MCF 10A (cell line): ENCODE measurements at regions of chr6 and their contacts with region 1.

Region 1: DNA sequence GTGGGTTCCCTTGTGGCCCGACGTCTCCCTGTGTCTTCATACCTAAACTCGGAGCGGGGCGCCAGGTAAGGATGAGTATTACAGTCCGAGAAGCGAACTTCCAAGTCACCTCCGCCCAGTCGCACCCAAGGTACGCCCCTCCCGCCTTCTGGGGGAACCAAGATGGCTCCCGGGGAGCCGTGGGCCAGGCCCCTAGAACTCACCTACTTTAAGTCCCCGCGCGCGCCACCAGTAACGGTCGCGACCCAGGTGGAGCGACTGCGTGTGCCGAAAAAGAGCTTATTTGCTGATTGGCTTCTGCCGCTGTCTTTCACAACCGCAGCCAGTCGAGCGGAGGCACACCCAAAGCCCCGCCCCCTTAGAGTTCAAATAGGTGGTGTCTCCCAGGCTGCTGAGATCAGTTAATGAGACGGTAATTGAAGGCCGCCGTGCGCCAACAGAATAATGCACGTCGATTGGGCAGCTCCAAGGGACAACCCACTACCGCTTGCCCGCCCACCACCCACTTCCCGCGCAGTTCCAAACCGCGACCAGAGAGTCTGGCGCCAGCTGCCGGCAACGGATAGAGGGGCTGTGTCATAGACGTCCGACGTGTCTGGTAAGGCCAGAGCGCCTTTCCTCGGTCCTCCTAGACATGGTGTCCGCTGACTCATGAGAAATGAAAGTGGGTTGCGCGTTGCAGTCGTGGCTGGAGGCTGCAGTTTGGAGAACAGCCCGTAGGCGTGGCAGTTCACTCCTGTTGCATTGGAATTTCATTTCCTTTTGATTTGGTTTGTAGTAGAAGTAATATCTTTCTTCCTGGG is at the start of gene MDC1:
- DNase-seq: peak; percentile 100
- H3K4me3 Mint-ChIP-seq: peak within 1 kb of the TSS; percentile 88
- H3K27ac Mint-ChIP-seq: peak within 1 kb of the TSS; percentile 94
- H3K4me1 Mint-ChIP-seq: peaks cover 38% of the 10 kb centered on the region
- H3K27me3 Mint-ChIP-seq: no peaks in the 10 kb centered on the region
- CTCF ChIP-seq: no peak
- total RNA-seq, gene MDC1: 50.6 and 54.5 TPM in 2 replicates

Region 2: GRCh38 chr6:30541515-30542403 is 175.5 kb before region 1 on chr6:
- CTCF ChIA-PET with region 1: no interaction called
- POLR2A ChIA-PET with region 1: no interaction called
- intact Hi-C with region 1: loop called (anchors 5 kb)
- DNase-seq: peak; percentile 74
- H3K4me3 Mint-ChIP-seq: peak overlapping the region; percentile 15
- H3K27ac Mint-ChIP-seq: no peak overlapping the region
- H3K4me1 Mint-ChIP-seq: peaks cover 12% of the 10 kb centered on the region
- H3K27me3 Mint-ChIP-seq: no peaks in the 10 kb centered on the region
- CTCF ChIP-seq: peak; percentile 92

Region 3: GRCh38 chr6:30672445-30673253 is 44.6 kb before region 1 on chr6 and contains the start of gene DHX16:
- CTCF ChIA-PET with region 1: interaction called, 537 read pairs
- POLR2A ChIA-PET with region 1: interaction called, 208 read pairs
- intact Hi-C with region 1: no loop called
- DNase-seq: peak; percentile 99
- H3K4me3 Mint-ChIP-seq: peak within 1 kb of the TSS; percentile 83
- H3K27ac Mint-ChIP-seq: peak within 1 kb of the TSS; percentile 52
- H3K4me1 Mint-ChIP-seq: peaks cover 12% of the 10 kb centered on the region
- H3K27me3 Mint-ChIP-seq: no peaks in the 10 kb centered on the region
- CTCF ChIP-seq: peak; percentile 71
- total RNA-seq, gene DHX16: 41.3 and 49.8 TPM in 2 replicates

Region 4: GRCh38 chr6:30678964-30679726 is 38.1 kb before region 1 on chr6:
- CTCF ChIA-PET with region 1: interaction called, 537 read pairs
- POLR2A ChIA-PET with region 1: interaction called, 251 read pairs
- intact Hi-C with region 1: loop called (anchors 1 kb)
- DNase-seq: peak; percentile 82
- H3K4me3 Mint-ChIP-seq: peak overlapping the region; percentile 41
- H3K27ac Mint-ChIP-seq: no peak overlapping the region
- H3K4me1 Mint-ChIP-seq: peaks cover 28% of the 10 kb centered on the region
- H3K27me3 Mint-ChIP-seq: no peaks in the 10 kb centered on the region
- CTCF ChIP-seq: peak; percentile 98

Region 5: GRCh38 chr6:30686908-30687658 is 30.2 kb before region 1 on chr6:
- CTCF ChIA-PET with region 1: interaction called, 537 read pairs
- POLR2A ChIA-PET with region 1: interaction called, 477 read pairs
- intact Hi-C with region 1: loop called (anchors 1 kb)
- DNase-seq: peak; percentile 96
- H3K4me3 Mint-ChIP-seq: peak overlapping the region; percentile 94
- H3K27ac Mint-ChIP-seq: peak overlapping the region; percentile 80
- H3K4me1 Mint-ChIP-seq: peaks cover 66% of the 10 kb centered on the region
- H3K27me3 Mint-ChIP-seq: no peaks in the 10 kb centered on the region
- CTCF ChIP-seq: no peak

Region 6: GRCh38 chr6:30700340-30700739 is 16.9 kb before region 1 on chr6:
- CTCF ChIA-PET with region 1: interaction called, 14 read pairs
- POLR2A ChIA-PET with region 1: interaction called, 477 read pairs
- intact Hi-C with region 1: no loop called
- DNase-seq: no peak
- H3K4me3 Mint-ChIP-seq: no peak overlapping the region
- H3K27ac Mint-ChIP-seq: no peak overlapping the region
- H3K4me1 Mint-ChIP-seq: peaks cover 6% of the 10 kb centered on the region
- H3K27me3 Mint-ChIP-seq: no peaks in the 10 kb centered on the region
- CTCF ChIP-seq: no peak

Region 7: DNA sequence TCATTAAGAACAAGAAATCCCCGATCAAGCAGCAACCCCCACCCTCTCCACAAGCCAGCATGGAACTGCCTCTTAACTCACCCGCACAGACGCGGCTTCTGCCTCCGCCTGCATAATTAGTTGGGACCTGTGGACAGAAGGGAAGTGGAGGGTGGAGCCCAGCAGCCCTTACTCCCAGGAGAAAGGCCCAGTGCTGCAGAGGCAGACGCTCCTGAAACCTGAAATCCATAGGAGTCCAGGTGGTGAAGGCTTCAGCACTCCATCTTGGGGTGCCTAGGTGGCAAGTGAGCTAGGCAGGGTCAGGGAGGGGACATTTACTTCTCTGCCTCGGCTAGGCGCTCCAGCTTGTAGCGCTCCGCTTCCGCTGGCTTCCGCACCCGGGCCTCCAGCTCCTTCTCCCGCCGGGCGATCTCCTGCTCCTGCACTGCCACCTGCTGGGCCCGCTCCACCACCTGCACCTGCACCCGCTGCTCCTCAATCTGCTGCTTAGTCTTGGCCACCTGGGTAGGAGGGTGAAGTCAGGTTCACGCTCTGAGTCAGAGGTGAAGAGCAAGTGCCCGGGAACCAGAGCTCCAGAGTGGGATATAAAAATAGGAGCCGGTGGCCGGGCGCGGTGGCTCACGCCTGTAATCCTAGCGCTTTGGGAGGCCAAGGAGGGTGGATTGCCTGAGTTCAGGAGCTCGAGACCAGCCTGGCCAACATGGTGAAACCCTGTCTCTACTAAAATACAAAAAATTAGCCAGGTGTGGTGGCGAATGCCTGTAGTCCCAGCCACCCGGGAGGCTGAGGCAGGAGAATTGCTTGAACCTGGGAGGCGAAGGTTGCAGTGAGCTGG is 13.6 kb after region 1 on chr6:
- CTCF ChIA-PET with region 1: interaction called, 59 read pairs
- POLR2A ChIA-PET with region 1: interaction called, 26 read pairs
- intact Hi-C with region 1: no loop called
- DNase-seq: peak; percentile 91
- H3K4me3 Mint-ChIP-seq: no peak overlapping the region
- H3K27ac Mint-ChIP-seq: no peak overlapping the region
- H3K4me1 Mint-ChIP-seq: peaks cover 7% of the 10 kb centered on the region
- H3K27me3 Mint-ChIP-seq: no peaks in the 10 kb centered on the region
- CTCF ChIP-seq: peak; percentile 86